Posterior vena cava (tissue), 2 donors: ENCODE measurements at regions of chr20 and their contacts with region 1.

Region 1: GRCh38 chr20:19583532-19584175 is 174.4 kb upstream of the RIN2 start:
- DNase-seq: peak; percentile 87

Region 2: DNA sequence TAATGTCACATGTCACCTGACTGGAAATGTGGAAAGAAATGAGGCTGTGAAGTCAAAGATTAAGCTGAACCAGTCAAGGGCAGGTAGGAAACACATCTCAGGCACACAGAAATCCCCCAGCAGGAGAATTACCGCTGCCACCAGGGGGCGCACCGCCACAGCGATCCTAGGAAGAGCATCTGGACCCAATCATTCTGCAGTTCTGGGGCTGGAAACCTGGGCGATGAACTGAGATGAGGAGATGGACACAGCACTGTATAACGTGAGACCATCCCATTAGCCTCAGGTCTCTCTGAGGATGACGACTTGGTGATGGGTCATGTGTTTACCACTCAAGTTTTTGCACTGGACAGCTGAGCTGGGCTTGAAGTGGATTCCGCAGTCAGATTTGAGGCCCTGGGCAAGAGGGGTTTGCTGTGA is 377.7 kb before region 1 on chr20:
- intact Hi-C with region 1: loop called (anchors 2 to 10 kb)
- DNase-seq: peak; percentile 92

Region 3: DNA sequence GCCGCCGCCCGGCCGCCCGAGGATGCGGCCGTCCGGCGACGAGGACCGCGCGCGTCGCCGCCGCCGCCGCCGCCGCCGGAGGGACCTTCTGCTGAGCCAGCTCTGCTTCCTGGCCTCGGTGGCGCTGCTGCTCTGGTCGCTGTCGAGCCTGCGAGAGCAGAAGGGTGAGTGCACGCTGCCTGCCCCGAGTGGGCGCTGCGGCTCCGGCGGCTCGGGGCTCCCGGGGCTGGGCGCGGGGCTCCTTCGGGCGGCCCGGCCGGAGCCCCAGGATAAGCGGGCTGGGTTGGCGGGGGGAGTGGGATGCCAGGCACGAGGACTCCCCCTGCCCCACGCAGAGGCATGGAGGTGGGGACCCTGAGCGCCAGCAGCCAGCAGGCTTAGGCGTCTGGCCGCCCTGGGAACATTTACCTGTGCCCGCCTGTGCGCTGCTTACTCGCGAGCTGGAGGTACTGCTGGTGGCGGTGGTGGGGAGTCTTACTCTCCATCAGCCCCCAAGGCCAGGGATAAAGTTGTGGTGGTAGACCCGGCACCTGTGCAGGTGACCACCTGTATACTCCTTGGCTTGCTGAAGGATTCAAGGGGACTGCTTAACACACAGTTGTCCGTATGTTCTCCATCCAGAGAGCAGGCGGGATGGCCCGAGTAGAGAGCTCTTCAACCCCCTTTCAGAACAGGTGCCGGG is 370.7 kb before region 1 on chr20:
- intact Hi-C with region 1: loop called in 1 of 2 experiments (anchors 10 kb)
- DNase-seq: peak; percentile 93

Region 4: GRCh38 chr20:19560881-19561480 is 22.7 kb before region 1 on chr20:
- intact Hi-C with region 1: no loop called
- DNase-seq: no peak

Region 5: DNA sequence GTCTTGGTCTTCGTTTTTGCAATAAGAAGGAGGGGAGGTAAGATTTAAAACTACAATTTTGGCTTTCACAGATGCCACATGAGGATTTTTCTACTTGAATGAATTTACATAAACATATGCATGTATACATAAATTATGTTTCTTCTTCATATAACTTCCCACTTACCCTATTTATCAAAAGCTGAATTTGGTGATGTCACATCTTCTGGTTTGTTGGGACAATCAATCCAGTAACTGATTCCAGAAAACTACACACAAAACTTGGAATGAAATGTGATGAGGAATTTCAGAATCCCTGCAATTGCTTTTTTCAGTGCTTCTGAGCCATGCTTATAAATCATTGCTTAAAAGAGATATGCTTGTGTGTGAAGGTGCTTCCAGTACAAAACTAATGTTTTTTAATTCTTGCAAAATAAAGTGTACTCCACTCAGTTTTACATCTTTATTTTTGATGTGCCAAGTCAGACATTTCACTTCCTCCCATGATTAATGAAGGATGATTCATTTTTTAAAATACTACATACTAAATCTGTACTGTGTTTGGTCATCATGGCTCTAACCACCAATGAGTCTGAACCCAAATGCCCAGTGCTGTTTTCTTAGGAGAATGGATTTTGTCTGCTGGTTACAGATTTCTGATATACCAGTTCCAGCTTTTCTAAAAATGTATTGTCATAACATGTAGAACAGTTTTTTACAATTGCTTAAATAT is 142.3 kb after region 1 on chr20:
- intact Hi-C with region 1: no loop called
- DNase-seq: no peak